GM12878 (cell line): ENCODE measurements at regions of chr5 and their contacts with region 1.

Region 1: DNA sequence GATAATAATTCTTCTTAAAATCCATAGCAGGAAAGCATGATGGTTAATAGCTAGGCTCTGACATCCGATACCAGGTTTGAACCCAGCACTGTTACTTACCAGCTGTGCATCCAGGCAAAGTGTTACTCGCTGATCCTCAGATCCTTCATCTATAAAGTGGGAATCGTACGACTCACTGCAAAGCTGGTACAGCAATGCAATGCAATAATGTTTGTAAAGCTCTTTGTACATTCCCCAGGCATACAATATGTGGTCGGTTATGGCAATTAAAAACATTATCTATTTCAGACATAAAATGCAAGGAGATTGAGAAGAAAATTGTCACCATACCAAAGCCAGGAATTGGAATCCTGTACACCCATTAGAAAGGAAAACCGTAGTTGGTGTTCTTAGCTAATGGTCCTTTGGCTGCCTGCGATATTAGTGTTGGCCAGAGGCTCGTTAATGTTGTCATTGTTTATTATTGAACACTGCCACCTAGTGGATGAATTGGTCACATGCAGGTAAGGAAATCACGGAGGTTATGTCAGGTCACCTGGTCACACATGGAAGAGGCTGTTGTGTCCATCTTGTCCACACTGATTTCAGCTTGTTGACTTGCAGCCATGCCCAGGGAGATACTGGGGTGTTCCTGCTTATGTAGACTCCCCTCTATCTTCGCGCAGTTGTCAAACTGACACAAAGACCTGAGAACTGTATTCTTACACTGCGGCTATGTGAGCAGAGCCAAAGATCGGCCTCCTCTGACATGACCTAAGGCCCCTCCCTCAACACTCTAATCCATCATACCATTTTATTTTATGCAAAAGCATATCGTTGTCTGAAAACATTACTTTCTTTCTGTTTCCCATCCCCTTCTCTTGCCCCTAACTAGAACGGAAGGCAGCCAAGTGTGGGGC is 87.5 kb upstream of the PPP2R2B start:
- DNase-seq: peak; percentile 26
- ATAC-seq: peak; percentile 99
- H3K4me3 ChIP-seq: no peak overlapping the region
- H3K27ac ChIP-seq: no peak overlapping the region
- H3K4me1 ChIP-seq: no peaks in the 10 kb centered on the region
- H3K27me3 ChIP-seq: no peaks in the 10 kb centered on the region
- CTCF ChIP-seq: peak; percentile 69 to 82 (median 72)
- EP300 ChIP-seq: no peak
- POLR2A ChIP-seq: no peak
- RAD21 ChIP-seq: peak; percentile 80

Region 2: DNA sequence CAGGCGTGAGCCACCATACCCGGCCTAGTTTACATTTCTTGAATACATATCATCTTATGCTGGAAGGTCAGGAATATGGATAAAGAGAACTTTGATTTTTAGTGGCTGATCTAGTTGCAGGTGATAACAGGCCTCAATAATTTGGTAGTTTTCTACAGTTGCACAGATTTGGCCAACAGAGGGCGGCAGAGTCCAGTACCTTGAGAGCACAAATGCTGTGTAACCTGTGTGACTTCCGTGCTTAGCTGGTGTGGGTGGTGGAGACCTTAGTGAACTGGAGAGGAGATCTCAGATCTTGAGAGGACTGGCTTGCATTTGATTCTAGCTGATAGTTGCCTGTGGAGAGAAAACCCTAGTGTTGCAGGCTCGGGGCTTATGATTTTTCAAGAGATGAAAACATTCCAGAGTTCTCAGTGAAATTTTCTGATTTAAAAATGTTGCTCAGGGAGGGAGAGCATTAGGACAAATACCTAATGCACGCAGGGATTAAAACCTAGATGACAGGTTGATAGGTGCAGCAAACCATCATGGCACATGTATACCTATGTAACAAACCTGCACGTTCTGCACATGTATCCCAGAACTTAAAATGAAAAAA is 432.7 kb before region 1 on chr5:
- CTCF ChIA-PET with region 1: interaction called, 86 read pairs
- POLR2A ChIA-PET with region 1: no interaction called
- RAD21 ChIA-PET with region 1: interaction called, 57 read pairs
- SMC1A ChIA-PET with region 1: interaction called, 22 read pairs
- in situ Hi-C with region 1: no loop called
- intact Hi-C with region 1: loop called (anchors 1 kb)
- DNase-seq: peak; percentile 44
- ATAC-seq: peak; percentile 95
- H3K4me3 ChIP-seq: no peak overlapping the region
- H3K27ac ChIP-seq: no peak overlapping the region
- H3K4me1 ChIP-seq: no peaks in the 10 kb centered on the region; the same call in 1 of the 2 replicates
- H3K27me3 ChIP-seq: no peaks in the 10 kb centered on the region
- CTCF ChIP-seq: peak; percentile 87 to 92 (median 90)
- EP300 ChIP-seq: no peak
- POLR2A ChIP-seq: no peak
- RAD21 ChIP-seq: peak; percentile 67

Region 3: GRCh38 chr5:146541958-146542849 is 423.8 kb before region 1 on chr5:
- CTCF ChIA-PET with region 1: interaction called, 80 read pairs
- POLR2A ChIA-PET with region 1: no interaction called
- RAD21 ChIA-PET with region 1: interaction called, 33 read pairs
- SMC1A ChIA-PET with region 1: interaction called, 31 read pairs
- in situ Hi-C with region 1: loop called (anchors 5 kb)
- intact Hi-C with region 1: loop called (anchors 1 kb)
- DNase-seq: no peak
- ATAC-seq: peak; percentile 100
- H3K4me3 ChIP-seq: no peak overlapping the region
- H3K27ac ChIP-seq: no peak overlapping the region
- H3K4me1 ChIP-seq: no peaks in the 10 kb centered on the region
- H3K27me3 ChIP-seq: no peaks in the 10 kb centered on the region
- CTCF ChIP-seq: peak; percentile 78 to 90 (median 83)
- EP300 ChIP-seq: no peak
- POLR2A ChIP-seq: no peak
- RAD21 ChIP-seq: peak; percentile 86

Region 4: DNA sequence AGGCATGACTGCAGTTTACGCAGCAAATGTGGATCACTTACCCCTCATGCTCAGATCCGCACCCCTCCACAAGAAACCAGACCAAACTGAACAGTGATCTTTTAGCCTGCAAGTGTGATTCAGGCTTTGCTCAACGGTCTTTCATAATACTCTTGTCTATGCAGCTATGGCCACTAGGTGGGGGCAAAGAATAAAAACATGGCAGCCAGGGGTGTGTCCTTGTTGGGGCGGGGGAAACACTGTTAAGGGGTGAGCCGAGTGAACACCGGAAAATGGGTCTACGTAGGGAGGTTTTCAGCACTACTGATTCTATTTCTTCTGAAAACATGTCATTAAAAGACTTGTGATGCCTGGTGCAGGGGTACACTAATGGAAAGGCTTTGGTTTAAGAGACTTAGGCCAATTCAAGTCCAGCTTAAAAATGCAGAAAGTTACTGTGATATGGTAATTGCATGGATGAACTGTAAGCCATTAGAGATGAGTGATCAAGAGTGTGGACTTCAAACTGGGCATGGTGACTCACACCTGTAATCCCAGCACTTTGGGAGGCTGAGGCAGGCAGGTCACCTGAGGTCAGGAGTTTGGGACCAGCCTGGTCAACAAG is 400.1 kb before region 1 on chr5:
- CTCF ChIA-PET with region 1: interaction called, 12 read pairs
- POLR2A ChIA-PET with region 1: no interaction called
- RAD21 ChIA-PET with region 1: interaction called, 8 read pairs
- SMC1A ChIA-PET with region 1: interaction called, 9 read pairs
- in situ Hi-C with region 1: no loop called
- intact Hi-C with region 1: loop called (anchors 1 kb)
- DNase-seq: no peak
- ATAC-seq: peak; percentile 100
- H3K4me3 ChIP-seq: no peak overlapping the region
- H3K27ac ChIP-seq: no peak overlapping the region
- H3K4me1 ChIP-seq: no peaks in the 10 kb centered on the region
- H3K27me3 ChIP-seq: no peaks in the 10 kb centered on the region; a peak in 1 of 4 replicates
- CTCF ChIP-seq: peak; percentile 62 to 64 (median 63)
- EP300 ChIP-seq: no peak
- POLR2A ChIP-seq: no peak
- RAD21 ChIP-seq: peak; percentile 54

Region 5: GRCh38 chr5:146653560-146653959 is 312.4 kb before region 1 on chr5:
- CTCF ChIA-PET with region 1: no interaction called
- POLR2A ChIA-PET with region 1: no interaction called
- RAD21 ChIA-PET with region 1: no interaction called
- SMC1A ChIA-PET with region 1: no interaction called
- in situ Hi-C with region 1: loop called (anchors 10 kb)
- intact Hi-C with region 1: no loop called
- DNase-seq: no peak
- ATAC-seq: no peak
- H3K4me3 ChIP-seq: no peak overlapping the region
- H3K27ac ChIP-seq: no peak overlapping the region
- H3K4me1 ChIP-seq: no peaks in the 10 kb centered on the region
- H3K27me3 ChIP-seq: peaks cover 0 to 3% of the 10 kb centered on the region in 2 experiments; a peak in 2 of 4 replicates
- CTCF ChIP-seq: no peak
- EP300 ChIP-seq: no peak
- POLR2A ChIP-seq: no peak
- RAD21 ChIP-seq: no peak

Region 6: GRCh38 chr5:146662229-146662628 is 303.8 kb before region 1 on chr5:
- CTCF ChIA-PET with region 1: interaction called, 34 read pairs
- POLR2A ChIA-PET with region 1: no interaction called
- RAD21 ChIA-PET with region 1: interaction called, 6 read pairs
- SMC1A ChIA-PET with region 1: interaction called, 8 read pairs
- in situ Hi-C with region 1: loop called (anchors 10 kb)
- intact Hi-C with region 1: loop called (anchors 1 kb)
- DNase-seq: no peak
- ATAC-seq: no peak
- H3K4me3 ChIP-seq: no peak overlapping the region
- H3K27ac ChIP-seq: no peak overlapping the region
- H3K4me1 ChIP-seq: no peaks in the 10 kb centered on the region
- H3K27me3 ChIP-seq: no peaks in the 10 kb centered on the region
- CTCF ChIP-seq: peak; percentile 44 to 63 (median 52); a peak in 4 of 6 replicates
- EP300 ChIP-seq: no peak
- POLR2A ChIP-seq: no peak
- RAD21 ChIP-seq: peak; percentile 27; the same call in 1 of the 2 replicates

Region 7: GRCh38 chr5:147017191-147017590 is 51.2 kb after region 1 on chr5:
- CTCF ChIA-PET with region 1: no interaction called
- POLR2A ChIA-PET with region 1: no interaction called
- RAD21 ChIA-PET with region 1: no interaction called
- SMC1A ChIA-PET with region 1: no interaction called
- in situ Hi-C with region 1: no loop called
- intact Hi-C with region 1: no loop called
- DNase-seq: no peak
- ATAC-seq: no peak
- H3K4me3 ChIP-seq: no peak overlapping the region
- H3K27ac ChIP-seq: no peak overlapping the region
- H3K4me1 ChIP-seq: no peaks in the 10 kb centered on the region
- H3K27me3 ChIP-seq: no peaks in the 10 kb centered on the region
- CTCF ChIP-seq: no peak
- EP300 ChIP-seq: no peak
- POLR2A ChIP-seq: no peak
- RAD21 ChIP-seq: no peak